AG04449 (cell line): ENCODE measurements at regions of chr2 and their contacts with region 1.

Region 1: GRCh38 chr2:219294356-219295351 is 14.5 kb downstream of the PTPRN start:
- DNase-seq: no peak
- H3K4me3 ChIP-seq: peak overlapping the region; percentile 59
- CTCF ChIP-seq: peak; percentile 96

Region 2: DNA sequence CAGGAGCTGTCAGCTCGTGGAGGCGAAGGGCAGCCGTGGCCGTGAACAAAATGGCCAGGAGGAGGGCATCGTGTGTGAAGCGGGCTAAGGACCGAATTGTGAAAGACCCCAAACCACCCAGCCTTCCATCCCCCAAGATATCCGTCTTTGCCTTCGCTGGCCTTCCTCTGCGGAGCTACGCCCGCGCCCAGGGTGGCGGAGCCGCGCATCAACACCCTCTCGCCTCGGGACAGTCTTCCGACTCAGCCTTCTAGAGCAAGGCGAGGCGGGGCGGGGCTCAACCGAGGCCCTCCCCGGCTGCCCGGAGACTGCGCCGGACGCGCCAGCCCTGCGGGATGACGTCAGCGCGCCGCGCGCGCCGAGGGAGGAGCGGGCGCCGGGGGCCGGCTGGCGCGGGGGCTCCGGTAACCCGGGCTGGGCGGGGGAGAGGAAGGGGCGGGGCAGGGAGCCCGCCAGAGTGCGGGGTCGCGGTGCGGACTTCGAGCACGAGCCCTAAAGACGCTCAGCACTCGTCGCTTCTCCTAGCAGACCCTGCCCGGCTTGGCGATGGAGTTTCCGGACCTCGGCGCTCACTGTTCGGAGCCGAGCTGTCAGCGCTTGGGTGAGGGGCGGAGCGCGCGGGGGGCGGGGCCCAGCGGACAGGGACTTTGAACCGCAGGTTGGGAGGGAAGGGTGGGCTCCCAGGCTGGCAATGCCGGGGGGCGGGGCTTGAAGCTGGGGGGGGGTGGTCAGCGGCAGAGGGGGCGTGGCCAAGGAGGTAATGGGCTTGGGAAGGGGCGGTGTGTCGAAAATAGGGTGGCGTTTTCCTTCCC is 88.0 kb before region 1 on chr2 and contains the start of gene ZFAND2B:
- CTCF ChIA-PET with region 1: interaction called, 13 read pairs
- POLR2A ChIA-PET with region 1: no interaction called
- DNase-seq: no peak
- H3K4me3 ChIP-seq: peak within 1 kb of the TSS; percentile 86
- CTCF ChIP-seq: no peak

Region 3: DNA sequence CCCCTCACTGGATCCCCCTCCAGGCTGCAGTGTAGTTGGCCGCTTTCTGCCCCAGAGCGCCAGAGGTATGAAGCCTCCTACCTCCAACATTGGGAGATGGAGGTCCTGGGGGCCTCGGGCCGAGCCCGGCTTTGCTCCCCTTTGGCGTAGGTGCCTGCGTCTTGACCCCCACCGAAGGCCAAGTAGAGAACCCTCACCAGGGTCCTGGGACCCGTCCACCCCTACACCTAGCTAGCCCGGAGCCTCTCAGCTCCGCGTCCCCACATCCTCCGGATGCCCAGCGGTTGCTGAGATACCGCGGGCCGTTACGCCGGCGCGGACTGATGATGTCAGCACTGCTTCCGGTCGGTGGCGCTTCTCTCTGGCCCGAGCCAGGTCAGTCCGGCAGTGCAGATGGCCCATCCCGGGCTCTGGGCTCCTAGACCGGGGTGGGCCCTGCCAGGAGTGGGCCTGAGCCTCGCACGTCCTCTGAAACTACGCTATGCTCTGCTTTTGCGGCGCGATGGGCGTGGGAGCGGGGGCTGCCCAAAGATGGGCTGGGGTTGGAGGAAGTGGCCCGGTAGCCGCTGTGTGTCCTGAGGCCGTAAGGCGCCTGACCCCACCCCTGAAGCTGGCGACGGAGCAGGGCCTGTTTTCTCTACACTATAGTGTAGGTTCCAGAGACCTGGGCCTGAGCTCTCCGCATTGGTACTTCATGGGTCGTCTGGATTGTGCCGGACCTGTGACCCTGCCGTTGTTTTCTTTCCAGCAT is 49.3 kb before region 1 on chr2 and contains the starts of genes GLB1L and STK16:
- CTCF ChIA-PET with region 1: interaction called, 35 read pairs
- POLR2A ChIA-PET with region 1: interaction called, 3 read pairs
- DNase-seq: peak; percentile 57
- H3K4me3 ChIP-seq: peak within 1 kb of the TSS; percentile 98
- CTCF ChIP-seq: no peak

Region 4: DNA sequence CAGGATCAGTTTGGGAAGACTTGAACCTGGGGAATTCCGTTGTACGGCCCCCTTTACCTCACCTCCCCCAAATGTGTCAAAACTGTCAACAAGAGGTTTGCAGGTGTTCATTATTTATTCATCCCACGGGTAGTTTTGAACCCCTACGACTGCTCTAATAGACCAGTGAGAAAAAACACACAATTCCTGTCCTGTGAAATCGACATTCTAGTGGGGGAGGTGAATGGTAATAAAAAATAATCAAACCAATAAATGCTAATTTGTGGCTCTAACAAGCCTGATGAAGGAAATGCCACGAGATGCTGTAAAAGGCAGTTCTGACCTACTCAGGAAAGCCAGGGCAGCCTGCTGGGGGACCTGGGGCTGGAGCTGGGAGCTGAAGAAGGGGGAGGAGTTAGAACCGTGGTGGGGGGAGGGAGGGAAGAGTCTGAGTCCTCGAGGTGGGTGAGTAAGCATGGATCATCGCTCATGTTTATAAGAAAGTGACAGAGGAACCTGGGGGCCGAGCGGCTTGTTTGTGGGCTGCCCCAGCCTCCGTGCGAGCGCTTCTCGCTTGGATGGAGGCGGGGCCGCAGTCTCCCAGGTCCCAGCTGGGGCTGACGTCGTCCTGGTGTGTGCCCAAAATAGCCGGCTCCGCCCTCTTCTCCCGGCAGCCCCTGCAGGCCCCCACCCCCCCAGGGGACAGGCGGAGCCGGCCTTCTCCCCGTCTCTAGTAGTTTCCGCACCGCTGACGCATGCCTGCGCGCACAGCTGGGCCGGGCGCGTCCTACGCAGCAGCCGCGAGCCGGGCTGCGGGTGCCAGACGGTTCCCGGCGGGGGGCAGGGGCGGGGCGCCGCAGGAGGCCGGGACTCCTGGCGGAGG is 15.8 kb before region 1 on chr2 and contains the start of gene DNAJB2:
- CTCF ChIA-PET with region 1: interaction called, 691 read pairs
- POLR2A ChIA-PET with region 1: interaction called, 9 read pairs
- DNase-seq: peak; percentile 93
- H3K4me3 ChIP-seq: peak within 1 kb of the TSS; percentile 78
- CTCF ChIP-seq: no peak

Region 5: DNA sequence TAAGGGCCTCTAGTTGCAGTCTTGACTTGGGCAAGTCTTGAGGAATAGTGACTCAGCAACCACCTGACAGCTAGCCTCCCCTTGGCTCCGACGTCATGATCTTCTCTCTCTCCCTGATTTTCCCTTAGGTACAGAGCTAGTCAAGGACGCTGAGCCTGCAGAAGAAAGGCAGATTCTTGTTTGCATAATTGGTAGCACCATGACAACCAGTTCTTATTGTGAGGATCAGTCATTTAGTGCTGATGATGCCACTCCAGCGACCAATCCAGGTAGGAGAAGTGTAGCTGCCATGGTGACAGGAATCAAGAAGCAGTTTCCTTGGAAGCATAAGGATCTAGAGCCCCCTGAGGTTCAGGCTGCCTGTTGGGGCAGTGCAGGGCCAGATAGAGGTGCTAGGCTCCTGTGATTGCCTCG is 40.7 kb after region 1 on chr2:
- CTCF ChIA-PET with region 1: interaction called, 11 read pairs
- POLR2A ChIA-PET with region 1: no interaction called
- DNase-seq: no peak
- H3K4me3 ChIP-seq: no peak overlapping the region
- CTCF ChIP-seq: no peak